Activated CD8-positive, alpha-beta T cell treated with anti-CD3 and anti-CD28 coated beads for 36 hours (primary cell): ENCODE measurements at regions of chr3 and their contacts with region 1.

Region 1: GRCh38 chr3:11643605-11644087 is at the start of gene VGLL4:
- DNase-seq: peak; percentile 82
- ATAC-seq: peak; percentile 72
- H3K4me3 Mint-ChIP-seq: peak within 1 kb of the TSS; percentile 94
- H3K27ac Mint-ChIP-seq: peak within 1 kb of the TSS; percentile 97
- H3K4me1 Mint-ChIP-seq: peaks cover 31% of the 10 kb centered on the region
- H3K27me3 Mint-ChIP-seq: no peaks in the 10 kb centered on the region
- CTCF ChIP-seq: no peak
- total RNA-seq, gene VGLL4: 54.4 to 60.2 TPM

Region 2: DNA sequence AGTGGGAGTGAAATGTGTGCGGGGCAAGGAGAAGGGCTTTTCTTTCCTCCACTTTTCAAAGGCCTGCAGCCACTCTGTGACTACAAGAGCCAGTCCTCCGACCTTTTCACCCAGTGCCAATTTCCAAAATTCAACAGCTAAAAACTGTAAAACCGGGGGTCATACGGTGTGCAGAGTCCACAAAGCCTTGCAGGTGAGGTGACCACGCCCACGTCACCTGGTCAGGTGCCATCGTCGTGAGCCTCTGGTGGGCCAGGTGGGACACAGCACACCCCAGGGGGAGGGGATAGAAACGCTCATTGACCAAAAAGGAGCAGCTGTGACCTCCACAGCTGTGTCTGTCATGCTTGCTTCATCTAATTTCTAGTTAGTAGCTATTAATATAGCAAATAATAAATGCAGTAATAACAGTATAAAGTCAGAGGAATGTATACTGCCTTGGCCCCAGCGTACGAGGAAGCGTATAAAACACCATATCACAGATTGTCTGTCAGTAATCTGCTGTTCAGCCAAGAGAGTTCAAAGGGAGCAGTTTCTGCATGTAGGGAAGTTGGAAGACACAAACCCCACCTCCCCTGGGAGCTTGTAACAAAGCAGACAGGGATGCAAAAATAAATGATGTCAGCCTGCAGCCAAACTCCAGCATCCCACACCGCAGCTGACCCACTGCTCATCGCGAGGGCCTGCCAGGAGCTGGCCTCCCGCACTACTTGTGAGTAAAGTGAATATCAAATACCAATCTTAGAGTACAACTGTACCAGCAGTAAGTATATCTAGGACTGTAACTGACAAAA is 86.6 kb before region 1 on chr3:
- CTCF ChIA-PET with region 1: no interaction called
- POLR2A ChIA-PET with region 1: interaction called, 3 read pairs
- intact Hi-C with region 1: loop called (anchors 10 kb)
- DNase-seq: no peak
- ATAC-seq: no peak
- H3K4me3 Mint-ChIP-seq: no peak overlapping the region
- H3K27ac Mint-ChIP-seq: no peak overlapping the region
- H3K4me1 Mint-ChIP-seq: peaks cover 13% of the 10 kb centered on the region
- H3K27me3 Mint-ChIP-seq: no peaks in the 10 kb centered on the region
- CTCF ChIP-seq: no peak

Region 3: GRCh38 chr3:11582191-11582968 is 61.3 kb before region 1 on chr3:
- CTCF ChIA-PET with region 1: interaction called, 3 read pairs
- POLR2A ChIA-PET with region 1: no interaction called
- intact Hi-C with region 1: loop called (anchors 10 kb)
- DNase-seq: peak; percentile 41
- ATAC-seq: peak; percentile 56
- H3K4me3 Mint-ChIP-seq: peak overlapping the region; percentile 52
- H3K27ac Mint-ChIP-seq: peak overlapping the region; percentile 38
- H3K4me1 Mint-ChIP-seq: peaks cover 72% of the 10 kb centered on the region
- H3K27me3 Mint-ChIP-seq: no peaks in the 10 kb centered on the region
- CTCF ChIP-seq: no peak

Region 4: GRCh38 chr3:11607816-11608215 is 35.8 kb before region 1 on chr3:
- CTCF ChIA-PET with region 1: interaction called, 3 read pairs
- POLR2A ChIA-PET with region 1: no interaction called
- intact Hi-C with region 1: loop called (anchors 5 kb)
- DNase-seq: peak; percentile 29
- ATAC-seq: peak; percentile 29
- H3K4me3 Mint-ChIP-seq: no peak overlapping the region
- H3K27ac Mint-ChIP-seq: no peak overlapping the region
- H3K4me1 Mint-ChIP-seq: peaks cover 84% of the 10 kb centered on the region
- H3K27me3 Mint-ChIP-seq: no peaks in the 10 kb centered on the region
- CTCF ChIP-seq: no peak

Region 5: GRCh38 chr3:11626084-11626463 is 17.6 kb before region 1 on chr3:
- CTCF ChIA-PET with region 1: interaction called, 9 read pairs
- POLR2A ChIA-PET with region 1: interaction called, 10 read pairs
- intact Hi-C with region 1: loop called (anchors 2 kb)
- DNase-seq: peak; percentile 52
- ATAC-seq: peak; percentile 51
- H3K4me3 Mint-ChIP-seq: peak overlapping the region; percentile 38
- H3K27ac Mint-ChIP-seq: peak overlapping the region; percentile 84
- H3K4me1 Mint-ChIP-seq: peaks cover 71% of the 10 kb centered on the region
- H3K27me3 Mint-ChIP-seq: no peaks in the 10 kb centered on the region
- CTCF ChIP-seq: no peak